ENCODE measurements at regions of chr12 and their contacts with region 1.

Region 1: GRCh38 chr12:111451649-111452129 is 46.0 kb downstream of the SH2B3 start:
- DNase-seq: peak; percentile 9 to 72
- H3K4me3 ChIP-seq: no peak overlapping the region
- H3K27ac ChIP-seq: no peak overlapping the region
- H3K4me1 ChIP-seq: peaks cover under 1 to 52% (median 8%) of the 10 kb centered on the region in 4 donors
- H3K27me3 ChIP-seq: no peaks in the 10 kb centered on the region
- CTCF ChIP-seq: peak in 5 of 7 experiments; percentile 57 to 82 (median 80)
- EP300 ChIP-seq: no peak
- POLR2A ChIP-seq: no peak

Region 2: GRCh38 chr12:111396726-111397445 is 54.8 kb before region 1 on chr12:
- intact Hi-C with region 1: loop called (anchors 2 kb)
- DNase-seq: peak; percentile 89 to 94
- H3K4me3 ChIP-seq: peak overlapping the region; percentile 25 to 39 (median 34)
- H3K27ac ChIP-seq: peak overlapping the region in 4 of 5 donors; percentile 37 to 68 (median 64)
- H3K4me1 ChIP-seq: peaks cover 7 to 16% (median 13%) of the 10 kb centered on the region in 4 donors
- H3K27me3 ChIP-seq: peaks cover 0 to 5% (median 0%) of the 10 kb centered on the region in 3 donors
- CTCF ChIP-seq: peak in 6 of 7 experiments; percentile 51 to 99 (median 96)
- EP300 ChIP-seq: no peak
- POLR2A ChIP-seq: no peak